ENCODE measurements at regions of chr12 and their contacts with region 1.

Region 1: DNA sequence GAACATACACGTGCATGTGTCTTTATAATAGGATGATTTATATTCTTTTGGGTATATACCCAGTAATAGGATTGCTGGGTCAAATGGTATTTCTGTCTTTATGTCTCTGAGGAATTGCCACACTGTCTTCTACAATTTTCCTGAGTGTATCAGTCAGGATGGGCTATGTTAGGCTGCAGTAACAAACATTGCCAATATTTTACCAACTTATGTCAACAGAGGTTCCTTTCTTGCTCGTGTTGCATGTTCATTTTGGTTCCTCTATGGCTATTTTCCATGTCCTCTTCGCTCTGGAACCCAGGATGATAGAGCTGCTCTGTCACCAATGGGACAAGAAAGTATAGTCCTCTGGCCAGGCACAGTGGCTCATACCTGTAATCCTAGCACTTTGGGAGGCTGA is 86.7 kb downstream of the ZNF664 start:
- DNase-seq: no peak
- H3K4me3 ChIP-seq: no peak overlapping the region
- H3K27ac ChIP-seq: no peak overlapping the region
- H3K4me1 ChIP-seq: no peaks in the 10 kb centered on the region
- H3K27me3 ChIP-seq: no peaks in the 10 kb centered on the region
- CTCF ChIP-seq: no peak
- POLR2A ChIP-seq: no peak

Region 2: GRCh38 chr12:123972457-123973401 is 87.0 kb before region 1 on chr12 and contains the starts of genes CCDC92 and ZNF664:
- intact Hi-C with region 1: no loop called
- DNase-seq: peak; percentile 89 to 94
- H3K4me3 ChIP-seq: peak within 1 kb of the TSS; percentile 75 to 97
- H3K27ac ChIP-seq: peak within 1 kb of the TSS; percentile 94 to 99
- H3K4me1 ChIP-seq: peaks cover 0 to 10% of the 10 kb centered on the region in 2 donors
- H3K27me3 ChIP-seq: no peaks in the 10 kb centered on the region
- CTCF ChIP-seq: peak in 2 of 4 experiments; percentile 25 to 56
- POLR2A ChIP-seq: peak; percentile 80 to 83
- total RNA-seq, gene CCDC92: 7.4 to 67.3 (median 32.8) TPM
- total RNA-seq, gene ZNF664: 23.1 to 97.1 (median 52.1) TPM

Region 3: DNA sequence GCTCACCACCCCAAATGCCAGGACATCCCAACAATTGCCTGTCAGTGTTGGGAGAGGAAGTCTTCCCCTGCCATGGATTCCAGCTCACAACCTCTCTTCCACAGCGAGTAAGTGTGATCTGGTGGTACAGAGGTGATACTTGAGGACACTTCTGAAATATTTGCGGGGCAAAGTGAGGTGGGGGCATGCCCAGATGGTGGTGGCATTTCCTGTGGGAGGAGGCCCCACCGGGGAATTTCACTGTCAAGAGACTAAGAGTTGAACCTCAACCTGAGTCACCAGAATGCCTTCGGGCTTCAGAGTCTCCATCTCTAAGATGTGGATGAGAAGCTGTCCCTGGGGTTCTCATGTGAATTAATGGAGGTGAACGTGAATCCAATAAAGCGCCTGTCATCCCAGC is 112.9 kb after region 1 on chr12:
- intact Hi-C with region 1: no loop called
- DNase-seq: no peak
- H3K4me3 ChIP-seq: no peak overlapping the region
- H3K27ac ChIP-seq: no peak overlapping the region
- H3K4me1 ChIP-seq: no peaks in the 10 kb centered on the region
- H3K27me3 ChIP-seq: no peaks in the 10 kb centered on the region
- CTCF ChIP-seq: no peak
- POLR2A ChIP-seq: no peak

Region 4: DNA sequence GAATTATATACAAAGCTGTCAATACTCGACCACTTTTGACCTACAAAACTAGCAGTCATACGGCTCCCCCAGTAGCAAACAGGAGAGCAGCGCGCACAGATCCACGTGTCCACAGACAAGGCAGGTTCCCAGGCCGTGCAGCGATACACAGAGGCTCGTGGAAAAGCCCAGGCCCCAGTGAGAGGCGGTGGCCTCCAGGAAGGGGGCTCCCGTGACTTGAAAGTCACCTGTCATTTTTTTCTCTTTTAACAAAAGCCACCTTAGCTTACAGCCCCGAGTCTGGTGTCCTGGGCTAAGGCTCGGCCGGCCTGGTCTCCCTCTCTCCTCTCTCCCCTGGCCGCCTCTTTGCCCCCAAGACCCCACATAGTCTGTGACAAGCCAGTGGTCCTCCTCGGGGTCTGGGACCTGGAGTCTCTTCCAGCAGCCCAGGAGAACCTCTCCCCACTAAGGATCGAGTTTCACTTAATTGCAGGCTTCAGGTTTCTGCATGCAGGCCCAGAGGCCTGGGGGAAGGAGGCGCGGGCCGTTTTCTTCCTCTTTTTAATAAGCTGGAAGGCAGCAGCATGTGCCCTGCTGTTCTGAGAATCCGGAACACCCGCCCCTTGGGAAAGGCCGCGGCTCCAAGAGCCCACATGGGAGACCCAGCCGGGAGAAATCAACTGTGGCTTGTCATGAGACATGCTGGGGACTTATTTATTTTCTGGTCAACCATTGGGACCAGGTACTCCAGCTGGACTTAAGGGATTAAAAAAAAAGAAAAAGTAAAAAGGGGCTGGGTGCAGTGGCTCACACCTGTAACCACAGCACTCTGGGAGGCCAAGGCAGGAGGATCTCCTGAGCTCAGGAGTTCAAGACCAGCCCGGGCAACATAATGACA is 491.8 kb after region 1 on chr12:
- intact Hi-C with region 1: loop called (anchors 10 kb)
- DNase-seq: peak in 1 of 2 donors; percentile 37
- H3K4me3 ChIP-seq: no peak overlapping the region
- H3K27ac ChIP-seq: peak overlapping the region; percentile 48 to 70
- H3K4me1 ChIP-seq: peaks cover 6 to 43% of the 10 kb centered on the region in 2 donors
- H3K27me3 ChIP-seq: no peaks in the 10 kb centered on the region
- CTCF ChIP-seq: no peak
- POLR2A ChIP-seq: peak in 1 of 2 donors; percentile 8

Measured in uterus (tissue), 4 donors.